ENCODE measurements at regions of chr19 and their contacts with region 1.

Region 1: DNA sequence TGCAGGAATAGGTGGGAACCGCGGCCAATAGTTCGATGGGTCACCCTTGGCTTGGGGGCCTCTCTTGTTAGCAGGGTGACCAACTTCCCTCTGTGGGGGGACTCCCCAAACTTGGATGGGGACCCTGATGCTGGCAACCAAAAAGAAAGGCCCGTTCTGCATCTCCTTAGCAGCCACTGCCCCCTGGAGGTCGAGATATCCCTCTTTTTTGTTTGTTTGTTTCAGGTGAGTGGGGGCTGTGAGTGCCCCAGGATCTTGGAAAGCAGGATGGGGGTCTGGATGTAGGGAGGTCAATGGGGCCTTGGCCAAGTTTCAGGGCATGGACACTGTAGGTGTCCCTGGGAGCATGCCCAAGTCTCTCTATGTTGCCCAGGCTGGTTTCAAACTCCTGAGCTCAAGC is 7.7 kb upstream of the CRTC1 start:
- DNase-seq: no peak
- ATAC-seq: no peak
- H3K4me3 ChIP-seq: no peak overlapping the region
- H3K27ac ChIP-seq: no peak overlapping the region
- H3K4me1 ChIP-seq: peaks cover 60% of the 10 kb centered on the region
- H3K27me3 ChIP-seq: no peaks in the 10 kb centered on the region
- CTCF ChIP-seq: peak; percentile 36

Region 2: GRCh38 chr19:18450931-18451845 is 224.6 kb before region 1 on chr19:
- intact Hi-C with region 1: loop called in 1 of 2 experiments (anchors 10 kb)
- DNase-seq: peak; percentile 85 to 94
- ATAC-seq: peak; percentile 79 to 90 (median 84)
- H3K4me3 ChIP-seq: no peak overlapping the region
- H3K27ac ChIP-seq: peak overlapping the region; percentile 23
- H3K4me1 ChIP-seq: peaks cover 13% of the 10 kb centered on the region
- H3K27me3 ChIP-seq: no peaks in the 10 kb centered on the region
- CTCF ChIP-seq: peak; percentile 97

Region 3: DNA sequence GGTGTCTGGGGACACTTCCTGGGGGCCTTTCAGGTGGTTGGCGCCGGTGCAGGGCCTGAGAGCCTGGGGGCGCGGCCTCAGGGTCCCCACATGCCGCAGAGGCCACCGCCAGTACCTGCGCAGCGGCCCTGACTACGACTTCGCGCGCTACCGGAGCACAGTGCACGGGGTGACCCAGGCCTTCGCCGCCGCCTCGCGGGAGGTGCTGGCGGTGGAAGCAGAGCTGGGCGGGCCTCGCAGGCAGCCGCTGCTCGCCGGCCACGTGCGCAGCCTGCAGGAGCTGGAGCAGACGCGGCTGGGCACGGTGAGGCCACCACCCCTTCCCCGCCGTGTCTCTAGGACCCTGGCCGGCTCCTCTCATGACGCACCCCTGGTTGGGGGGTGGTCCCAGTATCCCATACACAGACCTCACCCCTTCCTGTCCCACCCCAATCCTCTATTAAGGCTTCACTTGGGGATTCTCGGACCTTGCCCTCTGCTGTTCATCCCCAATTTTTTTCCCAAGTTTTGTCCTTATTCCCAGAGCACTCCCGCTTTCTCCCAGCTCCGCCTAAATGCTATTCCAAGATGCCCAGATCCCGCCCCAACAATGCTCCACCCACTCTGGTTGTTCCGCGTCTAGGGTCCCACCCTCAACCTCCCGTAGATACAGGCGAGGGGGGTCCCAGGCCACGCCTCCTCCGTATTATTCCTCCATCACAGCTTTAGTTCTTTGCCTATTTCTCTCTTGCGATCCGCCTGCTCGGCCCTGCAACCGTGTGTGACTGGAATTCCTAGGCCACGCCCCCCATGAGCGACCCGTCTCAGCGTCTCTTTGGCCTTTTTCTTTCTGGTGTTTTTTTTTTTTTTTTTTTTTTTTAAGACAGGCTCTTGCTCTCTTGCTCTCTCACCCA is 86.2 kb before region 1 on chr19:
- intact Hi-C with region 1: loop called (anchors 2 to 5 kb)
- DNase-seq: peak; percentile 75 to 84
- ATAC-seq: peak; percentile 66 to 80 (median 73)
- H3K4me3 ChIP-seq: peak overlapping the region; percentile 78
- H3K27ac ChIP-seq: peak overlapping the region; percentile 87
- H3K4me1 ChIP-seq: peaks cover 12% of the 10 kb centered on the region
- H3K27me3 ChIP-seq: no peaks in the 10 kb centered on the region
- CTCF ChIP-seq: no peak

Measured in psoas muscle (tissue), 8 donors.